ENCODE measurements at regions of chr17 and their contacts with region 1.

Region 1: DNA sequence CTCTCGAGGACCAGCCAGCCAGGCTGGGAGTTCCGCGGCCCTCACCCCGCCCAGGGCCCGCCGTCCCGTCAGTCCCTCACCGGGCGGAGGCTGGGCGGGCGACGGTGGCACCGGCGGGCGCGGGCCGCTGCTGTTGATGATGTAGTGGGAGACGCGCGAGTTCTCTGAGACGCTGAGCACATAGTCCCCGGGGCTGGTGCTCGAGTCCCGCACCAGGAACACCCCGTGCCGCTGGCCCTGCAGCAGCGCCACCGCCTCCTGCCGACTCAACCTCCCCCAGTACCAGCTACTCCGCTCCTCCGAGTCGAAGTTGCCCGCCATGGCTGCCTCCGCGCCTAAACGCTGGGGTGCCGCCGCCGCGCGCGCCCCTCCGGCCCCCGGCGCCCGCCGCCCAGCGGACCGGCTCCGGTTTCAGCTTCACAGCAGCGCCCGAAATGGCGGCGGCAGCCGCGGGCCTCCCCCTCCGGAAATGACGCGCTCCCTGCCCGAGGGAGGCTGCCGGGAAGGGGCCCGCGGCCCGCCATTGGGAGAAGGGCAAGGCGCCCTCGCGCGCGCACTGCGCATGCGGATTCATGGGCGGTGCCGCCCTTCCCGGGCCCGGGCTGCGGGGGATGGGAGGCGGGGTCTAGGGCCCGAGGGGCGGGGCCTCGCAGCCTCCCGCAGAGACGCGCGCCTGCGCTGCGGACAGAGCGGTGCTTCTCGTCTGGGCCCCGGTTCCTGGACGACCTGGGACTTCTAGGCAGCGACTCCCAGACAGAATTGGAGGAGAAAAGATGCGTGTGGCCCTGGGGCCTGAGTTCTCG is at the start of gene CRK:
- DNase-seq: peak; percentile 98
- ATAC-seq: peak; percentile 96
- total RNA-seq, gene CRK: 43.9 TPM

Region 2: GRCh38 chr17:1365445-1366039 is 90.5 kb before region 1 on chr17:
- intact Hi-C with region 1: loop called (anchors 2 kb)
- DNase-seq: no peak
- ATAC-seq: peak; percentile 65

Region 3: DNA sequence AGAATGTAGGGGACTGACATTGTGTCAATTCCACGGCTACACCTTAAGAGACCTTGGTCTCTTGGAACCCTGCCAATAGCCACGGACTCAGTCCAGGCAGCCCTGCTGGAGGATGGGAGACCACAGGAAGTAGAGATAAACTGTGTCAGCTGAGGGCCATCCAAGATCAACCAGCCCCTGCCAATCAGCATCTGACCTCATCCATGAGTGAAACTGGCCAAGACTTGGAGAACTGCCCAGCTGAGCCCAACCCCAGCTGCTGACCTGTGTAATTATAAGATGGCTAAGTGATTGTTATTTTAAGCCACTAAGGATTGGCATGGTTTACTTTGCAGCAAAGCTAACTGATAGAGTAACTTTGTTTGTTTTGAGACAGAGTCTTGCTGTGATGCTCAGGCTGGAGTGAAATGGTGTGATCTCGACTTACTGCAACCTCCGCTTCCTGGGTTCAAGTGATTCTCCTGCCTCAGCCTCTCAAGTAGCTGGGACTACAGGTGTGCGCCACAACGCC is 42.7 kb before region 1 on chr17:
- intact Hi-C with region 1: loop called (anchors 5 kb)
- DNase-seq: peak; percentile 83
- ATAC-seq: peak; percentile 89

Region 4: DNA sequence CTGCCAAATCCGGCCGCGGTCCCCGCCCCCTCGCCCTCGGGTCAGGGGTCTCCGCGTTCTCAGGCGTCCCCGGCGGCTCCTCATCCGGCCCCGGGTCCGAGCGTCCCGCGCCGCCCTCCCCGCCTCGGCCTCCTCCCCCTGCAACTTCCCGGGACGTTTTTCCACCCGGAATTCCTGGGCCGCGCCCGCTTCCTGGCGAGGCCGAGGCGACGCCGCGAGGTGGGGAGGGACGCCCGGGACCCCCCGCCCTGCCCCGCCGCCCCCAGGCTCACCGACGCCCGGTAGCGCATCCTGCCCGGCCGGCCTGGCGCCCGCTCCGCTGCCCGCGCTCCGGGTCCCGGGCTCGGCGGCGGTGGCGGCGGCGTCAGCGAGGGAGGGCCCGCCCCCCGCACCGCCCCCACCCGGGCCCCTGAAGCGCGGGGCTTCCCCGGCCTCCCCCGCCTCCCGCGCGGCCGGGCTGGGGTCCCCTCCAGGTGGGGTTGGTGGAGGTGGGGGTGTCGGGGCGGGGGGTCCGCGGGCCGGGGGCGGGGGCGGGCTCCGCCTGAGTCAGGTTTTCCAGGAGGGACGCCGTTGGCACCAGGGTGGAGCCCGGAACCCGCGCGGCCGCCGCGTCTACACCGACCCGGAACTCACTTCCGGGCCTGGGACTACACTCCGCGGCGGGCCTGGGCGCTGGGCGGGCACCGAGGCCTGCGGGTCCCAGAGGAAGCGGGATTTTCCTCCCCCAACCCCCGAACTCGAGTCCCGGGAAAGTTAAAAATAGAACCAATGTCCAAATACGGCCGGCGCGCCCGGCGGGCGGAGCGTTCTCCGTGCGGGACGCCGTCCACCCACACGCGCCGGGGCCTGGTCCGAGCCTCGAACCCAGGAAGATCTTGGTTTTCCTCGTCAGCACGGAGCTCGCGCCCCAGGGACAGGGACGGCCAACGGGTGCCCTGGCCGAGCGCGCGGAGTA is 29.7 kb after region 1 on chr17:
- intact Hi-C with region 1: loop called (anchors 2 kb)
- DNase-seq: peak; percentile 89
- ATAC-seq: peak; percentile 30

Region 5: GRCh38 chr17:1516388-1517161 is 60.6 kb after region 1 on chr17 and contains the start of gene INPP5K:
- intact Hi-C with region 1: loop called (anchors 2 kb)
- DNase-seq: peak; percentile 99
- ATAC-seq: peak; percentile 99
- total RNA-seq, gene INPP5K: 35.4 TPM

Region 6: GRCh38 chr17:1648963-1649843 is 193.2 kb after region 1 on chr17:
- intact Hi-C with region 1: loop called (anchors 5 kb)
- DNase-seq: peak; percentile 98
- ATAC-seq: peak; percentile 65